H1 (cell line): ENCODE measurements at regions of chr7 and their contacts with region 1.

Region 1: GRCh38 chr7:12490117-12490688 is 80.3 kb upstream of the SCIN start:
- DNase-seq: no peak
- H3K4me3 ChIP-seq: no peak overlapping the region
- H3K27ac ChIP-seq: no peak overlapping the region
- H3K4me1 ChIP-seq: peaks cover 0 to 4% (median 0%) of the 10 kb centered on the region in 4 experiments; a peak in 1 of 7 replicates
- H3K27me3 ChIP-seq: no peaks in the 10 kb centered on the region
- CTCF ChIP-seq: peak in 2 of 3 experiments; percentile 44 to 51; a peak in 2 of 4 replicates
- EP300 ChIP-seq: no peak; a peak in 1 of 3 replicates
- POLR2A ChIP-seq: no peak
- RAD21 ChIP-seq: peak; percentile 55 to 62

Region 2: GRCh38 chr7:11833431-11833830 is 656.8 kb before region 1 on chr7:
- CTCF ChIA-PET with region 1: interaction called, 11 read pairs
- POLR2A ChIA-PET with region 1: no interaction called
- DNase-seq: no peak
- H3K4me3 ChIP-seq: no peak overlapping the region
- H3K27ac ChIP-seq: no peak overlapping the region
- H3K4me1 ChIP-seq: peaks cover 0 to 2% (median 0%) of the 10 kb centered on the region in 4 experiments; a peak in 2 of 7 replicates
- H3K27me3 ChIP-seq: 0 out of 7 replicates have a peak, but pooled peaks cover 0 to 2% (median under 1%) of the 10 kb centered on the region in 4 experiments
- CTCF ChIP-seq: no peak
- EP300 ChIP-seq: no peak
- POLR2A ChIP-seq: no peak
- RAD21 ChIP-seq: no peak

Region 3: GRCh38 chr7:12107841-12108249 is 382.4 kb before region 1 on chr7:
- CTCF ChIA-PET with region 1: interaction called, 10 read pairs
- POLR2A ChIA-PET with region 1: no interaction called
- DNase-seq: no peak
- H3K4me3 ChIP-seq: no peak overlapping the region
- H3K27ac ChIP-seq: no peak overlapping the region
- H3K4me1 ChIP-seq: no peaks in the 10 kb centered on the region
- H3K27me3 ChIP-seq: peaks cover 0 to 16% (median 6%) of the 10 kb centered on the region in 4 experiments; a peak in 5 of 7 replicates
- CTCF ChIP-seq: no peak
- EP300 ChIP-seq: no peak
- POLR2A ChIP-seq: no peak
- RAD21 ChIP-seq: no peak

Region 4: DNA sequence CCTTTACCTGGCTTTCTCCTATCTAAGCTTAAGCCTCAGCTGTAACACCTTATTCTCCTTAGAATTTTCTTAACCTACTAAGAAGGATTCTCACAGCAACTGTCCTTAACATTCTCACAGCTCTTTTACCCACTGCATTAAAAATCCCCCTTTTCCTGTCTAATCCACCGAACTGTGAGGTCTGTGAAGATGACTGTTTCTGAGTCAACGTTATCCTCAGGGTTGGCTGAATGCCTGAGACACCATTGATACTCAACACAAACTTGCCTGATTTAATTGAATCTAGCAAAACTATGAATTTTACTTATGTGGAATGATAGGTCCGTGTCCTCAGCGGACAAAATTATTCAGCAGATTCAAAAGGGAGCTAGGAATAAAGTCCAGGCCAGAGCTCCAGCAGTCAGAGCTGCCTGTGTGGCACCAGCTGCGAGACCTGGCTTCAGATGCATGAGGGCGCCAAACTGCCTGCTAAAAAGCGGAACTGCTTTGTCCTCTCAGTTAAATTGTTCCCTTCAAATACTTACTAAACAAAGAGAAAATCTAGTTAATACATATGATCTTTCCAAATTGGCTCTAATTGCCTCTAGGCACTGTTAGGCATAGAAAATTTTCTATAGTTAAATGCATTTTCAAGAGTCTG is 53.2 kb before region 1 on chr7:
- CTCF ChIA-PET with region 1: interaction called, 57 read pairs
- POLR2A ChIA-PET with region 1: interaction called, 3 read pairs
- DNase-seq: no peak
- H3K4me3 ChIP-seq: no peak overlapping the region
- H3K27ac ChIP-seq: no peak overlapping the region
- H3K4me1 ChIP-seq: peaks cover 0 to 3% (median 0%) of the 10 kb centered on the region in 4 experiments; a peak in 2 of 7 replicates
- H3K27me3 ChIP-seq: no peaks in the 10 kb centered on the region
- CTCF ChIP-seq: peak; percentile 55 to 71 (median 60)
- EP300 ChIP-seq: no peak
- POLR2A ChIP-seq: no peak
- RAD21 ChIP-seq: peak; percentile 59 to 70

Region 5: GRCh38 chr7:12475362-12476063 is 14.7 kb before region 1 on chr7:
- CTCF ChIA-PET with region 1: interaction called, 46 read pairs
- POLR2A ChIA-PET with region 1: no interaction called
- DNase-seq: no peak
- H3K4me3 ChIP-seq: no peak overlapping the region
- H3K27ac ChIP-seq: no peak overlapping the region
- H3K4me1 ChIP-seq: no peaks in the 10 kb centered on the region; a peak in 1 of 7 replicates
- H3K27me3 ChIP-seq: no peaks in the 10 kb centered on the region
- CTCF ChIP-seq: no peak
- EP300 ChIP-seq: no peak
- POLR2A ChIP-seq: no peak
- RAD21 ChIP-seq: no peak